ENCODE measurements at regions of chr14 and their contacts with region 1.

Region 1: DNA sequence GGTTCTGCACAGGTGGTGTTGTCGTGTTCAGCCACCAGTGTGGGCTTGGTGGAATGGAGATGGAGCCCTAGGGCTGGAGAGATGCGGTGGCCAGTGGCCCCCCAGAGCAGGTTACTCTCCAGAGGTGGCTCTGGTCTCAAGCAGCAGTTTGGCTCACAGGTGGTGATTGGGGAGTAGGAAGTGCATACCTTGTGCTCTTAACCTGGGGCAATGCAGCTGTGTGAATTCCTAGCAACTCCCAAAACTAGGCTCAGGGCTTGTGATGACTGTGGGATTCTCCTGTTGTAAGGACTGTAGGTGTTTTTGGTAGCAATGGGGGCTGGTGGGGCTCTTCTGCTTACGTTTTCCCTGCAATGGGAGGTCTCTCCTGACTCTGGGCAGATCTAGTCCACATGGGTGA is 22.3 kb upstream of the PALS1 start:
- DNase-seq: no peak
- ATAC-seq: no peak
- H3K4me3 ChIP-seq: no peak overlapping the region
- H3K4me3 Mint-ChIP-seq: no peak overlapping the region
- H3K27ac ChIP-seq: no peak overlapping the region
- H3K27ac Mint-ChIP-seq: no peak overlapping the region
- H3K4me1 ChIP-seq: no peaks in the 10 kb centered on the region
- H3K4me1 Mint-ChIP-seq: no peaks in the 10 kb centered on the region
- H3K27me3 ChIP-seq: peaks cover 0 to 12% of the 10 kb centered on the region in 2 experiments
- H3K27me3 Mint-ChIP-seq: peaks cover 0 to 3% of the 10 kb centered on the region in 2 donors

Region 2: GRCh38 chr14:67187210-67187609 is 31.7 kb before region 1 on chr14:
- CTCF ChIA-PET with region 1: no interaction called
- POLR2A ChIA-PET with region 1: interaction called in 1 of 2 experiments, 11 read pairs
- DNase-seq: no peak
- ATAC-seq: no peak
- H3K4me3 ChIP-seq: no peak overlapping the region
- H3K4me3 Mint-ChIP-seq: no peak overlapping the region
- H3K27ac ChIP-seq: no peak overlapping the region
- H3K27ac Mint-ChIP-seq: no peak overlapping the region
- H3K4me1 ChIP-seq: peaks cover 0 to 7% of the 10 kb centered on the region in 2 experiments
- H3K4me1 Mint-ChIP-seq: peaks cover 7 to 8% (median 8%) of the 10 kb centered on the region in 3 donors
- H3K27me3 ChIP-seq: no peaks in the 10 kb centered on the region
- H3K27me3 Mint-ChIP-seq: no peaks in the 10 kb centered on the region

Measured in T-cell (primary cell).